PC-3 (cell line): ENCODE measurements at regions of chr12 and their contacts with region 1.

Region 1: GRCh38 chr12:27284751-27285150 is 40.7 kb downstream of the STK38L start:
- DNase-seq: peak; percentile 57
- ATAC-seq: peak; percentile 74
- H3K4me3 ChIP-seq: no peak overlapping the region
- H3K27ac ChIP-seq: peak overlapping the region; percentile 9
- H3K4me1 ChIP-seq: peaks cover 17% of the 10 kb centered on the region
- H3K27me3 ChIP-seq: no peaks in the 10 kb centered on the region
- CTCF ChIP-seq: no peak

Region 2: GRCh38 chr12:27236498-27236897 is 48.3 kb before region 1 on chr12:
- CTCF ChIA-PET with region 1: no interaction called
- POLR2A ChIA-PET with region 1: interaction called, 11 read pairs
- intact Hi-C with region 1: no loop called
- DNase-seq: peak; percentile 58
- ATAC-seq: peak; percentile 63
- H3K4me3 ChIP-seq: no peak overlapping the region
- H3K27ac ChIP-seq: no peak overlapping the region
- H3K4me1 ChIP-seq: no peaks in the 10 kb centered on the region
- H3K27me3 ChIP-seq: no peaks in the 10 kb centered on the region
- CTCF ChIP-seq: no peak

Region 3: DNA sequence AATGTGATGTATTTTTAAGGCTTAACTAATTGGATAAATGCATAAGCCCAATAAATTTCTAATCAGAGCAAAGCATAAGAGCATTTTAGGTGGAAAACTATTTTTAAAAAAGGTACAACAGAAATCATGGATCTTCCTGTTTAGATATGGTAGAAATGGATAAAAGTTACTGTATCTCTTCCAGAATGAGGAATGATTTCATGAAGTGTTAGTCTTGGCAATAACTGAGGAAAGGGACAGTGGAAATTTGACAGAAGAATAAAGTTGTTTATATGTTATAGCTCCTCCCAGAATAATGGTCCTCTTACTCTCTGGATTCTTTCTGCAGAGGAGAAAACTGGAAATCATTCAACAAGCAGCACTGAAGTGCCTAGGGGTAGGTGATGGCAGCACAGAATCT is 15.5 kb after region 1 on chr12:
- CTCF ChIA-PET with region 1: interaction called, 3 read pairs
- POLR2A ChIA-PET with region 1: interaction called, 5 read pairs
- intact Hi-C with region 1: loop called (anchors 2 kb)
- DNase-seq: no peak
- ATAC-seq: no peak
- H3K4me3 ChIP-seq: no peak overlapping the region
- H3K27ac ChIP-seq: no peak overlapping the region
- H3K4me1 ChIP-seq: peaks cover 10% of the 10 kb centered on the region
- H3K27me3 ChIP-seq: no peaks in the 10 kb centered on the region
- CTCF ChIP-seq: no peak

Region 4: DNA sequence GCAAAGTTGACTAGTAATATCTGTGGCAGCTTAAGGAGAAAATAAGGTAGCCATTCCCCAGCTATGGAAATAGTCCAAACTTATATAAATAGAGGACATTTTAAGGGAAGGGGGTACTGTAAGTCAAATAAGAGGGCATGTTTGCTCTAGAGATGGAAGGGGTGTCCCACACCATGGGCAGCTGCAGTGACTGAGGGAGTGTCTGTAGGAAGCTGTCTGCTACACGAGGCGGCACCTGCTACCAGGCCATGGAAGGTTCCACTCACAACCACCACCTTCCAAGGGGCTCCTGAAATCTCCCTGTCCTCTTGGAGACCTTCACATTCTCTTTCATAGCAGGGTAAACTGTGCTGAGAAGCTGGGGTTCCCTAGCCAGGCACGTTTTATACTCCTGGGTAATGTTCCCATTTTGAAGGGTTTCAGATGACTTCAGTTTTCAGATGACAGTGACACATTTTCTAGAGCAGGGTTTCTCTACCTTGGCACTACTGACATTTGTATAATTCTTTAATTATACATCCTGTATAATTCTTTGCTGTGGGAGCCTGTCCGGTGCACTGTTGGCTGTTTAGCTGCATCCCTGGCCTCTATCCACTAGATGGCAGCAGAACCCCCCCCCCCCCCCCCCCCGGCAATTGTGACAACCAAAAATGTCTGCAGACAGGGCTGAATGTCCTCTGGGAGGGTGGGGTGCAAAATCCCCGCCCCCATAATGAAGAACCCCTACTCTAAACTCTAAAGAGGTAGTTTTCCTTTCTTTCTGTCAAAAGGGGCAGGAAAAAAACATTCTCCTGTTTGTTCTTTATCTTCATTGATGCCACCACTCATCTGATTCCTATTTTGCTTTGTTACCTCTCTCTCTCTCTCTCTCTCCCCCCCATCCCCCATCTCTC is 150.2 kb after region 1 on chr12:
- CTCF ChIA-PET with region 1: no interaction called
- POLR2A ChIA-PET with region 1: no interaction called
- intact Hi-C with region 1: no loop called
- DNase-seq: peak; percentile 33
- ATAC-seq: peak; percentile 82
- H3K4me3 ChIP-seq: no peak overlapping the region
- H3K27ac ChIP-seq: no peak overlapping the region
- H3K4me1 ChIP-seq: no peaks in the 10 kb centered on the region
- H3K27me3 ChIP-seq: no peaks in the 10 kb centered on the region
- CTCF ChIP-seq: peak; percentile 72